ENCODE measurements at regions of chr5 and their contacts with region 1.

Region 1: DNA sequence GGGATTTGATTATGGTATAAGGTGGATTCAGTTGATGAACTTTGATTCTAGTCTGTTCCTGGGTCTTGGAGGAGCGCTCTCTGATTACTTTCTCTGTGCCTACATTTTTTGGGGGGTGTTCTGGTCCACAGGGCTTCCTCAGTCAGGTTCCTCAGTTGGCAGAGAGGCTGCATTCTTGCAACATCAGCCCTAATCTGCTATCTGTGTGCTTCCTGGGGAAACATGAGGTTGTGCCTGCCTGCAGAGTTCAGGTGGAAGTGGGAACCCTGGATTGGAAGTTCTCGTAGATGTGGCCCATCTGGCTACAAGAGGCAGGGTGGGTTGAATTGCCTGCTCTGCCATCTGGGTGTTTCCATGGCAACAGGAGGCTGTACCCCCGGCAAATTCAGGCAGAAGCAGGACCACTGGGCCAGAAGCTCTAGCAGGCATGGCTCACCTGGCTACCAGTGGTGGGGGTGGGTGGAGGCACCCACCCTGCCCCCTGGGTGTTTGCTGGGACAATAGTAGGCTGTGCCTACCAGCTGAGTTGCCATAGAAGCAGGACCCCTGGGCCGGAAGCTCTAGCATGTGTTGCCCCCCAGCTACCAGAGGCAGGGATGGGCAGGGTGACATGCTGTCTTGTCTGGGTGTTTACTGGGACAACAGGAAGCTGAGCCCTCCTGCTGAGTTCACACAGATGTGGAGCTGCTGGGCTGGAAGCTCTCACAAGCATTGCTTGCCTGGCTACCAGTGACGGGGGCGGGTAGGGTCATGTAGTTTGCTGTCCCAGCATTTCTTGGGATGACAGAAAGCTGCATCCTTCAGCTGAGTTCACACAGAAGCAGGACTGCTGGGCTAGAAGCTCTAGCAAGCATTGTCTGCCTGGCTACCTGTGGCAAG is 24.7 kb downstream of the POLK start:
- DNase-seq: no peak
- ATAC-seq: no peak
- H3K4me3 ChIP-seq: no peak overlapping the region
- H3K27ac ChIP-seq: no peak overlapping the region
- H3K4me1 ChIP-seq: no peaks in the 10 kb centered on the region
- H3K27me3 ChIP-seq: no peaks in the 10 kb centered on the region
- CTCF ChIP-seq: no peak

Region 2: GRCh38 chr5:76372323-76373054 is 836.1 kb after region 1 on chr5:
- CTCF ChIA-PET with region 1: no interaction called
- POLR2A ChIA-PET with region 1: interaction called, 10 read pairs
- intact Hi-C with region 1: no loop called
- DNase-seq: peak; percentile 90
- ATAC-seq: peak; percentile 94
- H3K4me3 ChIP-seq: peak overlapping the region; percentile 49; the same call in 1 of the 2 replicates
- H3K27ac ChIP-seq: peak overlapping the region; percentile 91
- H3K4me1 ChIP-seq: peaks cover 23% of the 10 kb centered on the region
- H3K27me3 ChIP-seq: no peaks in the 10 kb centered on the region
- CTCF ChIP-seq: no peak

Measured in PC-3 (cell line).